Panc1 (cell line): ENCODE measurements at regions of chr4 and their contacts with region 1.

Region 1: GRCh38 chr4:186021461-186022167 is 47.3 kb upstream of the TLR3 start:
- DNase-seq: peak; percentile 12
- ATAC-seq: peak; percentile 72; the same call in 1 of the 2 replicates
- H3K4me3 ChIP-seq: no peak overlapping the region
- H3K27ac ChIP-seq: no peak overlapping the region
- H3K4me1 ChIP-seq: no peaks in the 10 kb centered on the region
- H3K27me3 ChIP-seq: no peaks in the 10 kb centered on the region
- CTCF ChIP-seq: peak; percentile 88

Region 2: GRCh38 chr4:185445209-185445608 is 576.4 kb before region 1 on chr4:
- CTCF ChIA-PET with region 1: no interaction called
- POLR2A ChIA-PET with region 1: interaction called, 12 read pairs
- in situ Hi-C with region 1: no loop called
- intact Hi-C with region 1: no loop called
- DNase-seq: no peak
- ATAC-seq: no peak
- H3K4me3 ChIP-seq: no peak overlapping the region
- H3K27ac ChIP-seq: no peak overlapping the region
- H3K4me1 ChIP-seq: no peaks in the 10 kb centered on the region
- H3K27me3 ChIP-seq: no peaks in the 10 kb centered on the region
- CTCF ChIP-seq: no peak

Region 3: GRCh38 chr4:185573651-185574199 is 447.9 kb before region 1 on chr4:
- CTCF ChIA-PET with region 1: no interaction called
- POLR2A ChIA-PET with region 1: interaction called, 11 read pairs
- in situ Hi-C with region 1: no loop called
- intact Hi-C with region 1: no loop called
- DNase-seq: no peak
- ATAC-seq: peak; percentile 97
- H3K4me3 ChIP-seq: peak overlapping the region in 1 of 2 experiments; percentile 34; a peak in 1 of 4 replicates
- H3K27ac ChIP-seq: peak overlapping the region; percentile 48; the same call in 1 of the 2 replicates
- H3K4me1 ChIP-seq: peaks cover 7% of the 10 kb centered on the region; the same call in 1 of the 2 replicates
- H3K27me3 ChIP-seq: no peaks in the 10 kb centered on the region
- CTCF ChIP-seq: no peak

Region 4: GRCh38 chr4:185640811-185641675 is 380.6 kb before region 1 on chr4:
- CTCF ChIA-PET with region 1: interaction called, 17 read pairs
- POLR2A ChIA-PET with region 1: no interaction called
- in situ Hi-C with region 1: no loop called
- intact Hi-C with region 1: loop called (anchors 5 kb)
- DNase-seq: peak; percentile 10
- ATAC-seq: no peak
- H3K4me3 ChIP-seq: no peak overlapping the region
- H3K27ac ChIP-seq: no peak overlapping the region
- H3K4me1 ChIP-seq: no peaks in the 10 kb centered on the region
- H3K27me3 ChIP-seq: no peaks in the 10 kb centered on the region
- CTCF ChIP-seq: peak; percentile 37; the same call in 1 of the 2 replicates